GM10248 (cell line): ENCODE measurements at regions of chr12 and their contacts with region 1.

Region 1: GRCh38 chr12:53746592-53747092 is 5.1 kb downstream of the CISTR start:
- DNase-seq: peak; percentile 86
- CTCF ChIP-seq: peak; percentile 100

Region 2: GRCh38 chr12:53675651-53676453 is 70.8 kb before region 1 on chr12 and contains the start of gene ATP5MC2:
- CTCF ChIA-PET with region 1: interaction called, 72 read pairs
- POLR2A ChIA-PET with region 1: no interaction called
- DNase-seq: peak; percentile 99
- CTCF ChIP-seq: peak; percentile 99

Region 3: DNA sequence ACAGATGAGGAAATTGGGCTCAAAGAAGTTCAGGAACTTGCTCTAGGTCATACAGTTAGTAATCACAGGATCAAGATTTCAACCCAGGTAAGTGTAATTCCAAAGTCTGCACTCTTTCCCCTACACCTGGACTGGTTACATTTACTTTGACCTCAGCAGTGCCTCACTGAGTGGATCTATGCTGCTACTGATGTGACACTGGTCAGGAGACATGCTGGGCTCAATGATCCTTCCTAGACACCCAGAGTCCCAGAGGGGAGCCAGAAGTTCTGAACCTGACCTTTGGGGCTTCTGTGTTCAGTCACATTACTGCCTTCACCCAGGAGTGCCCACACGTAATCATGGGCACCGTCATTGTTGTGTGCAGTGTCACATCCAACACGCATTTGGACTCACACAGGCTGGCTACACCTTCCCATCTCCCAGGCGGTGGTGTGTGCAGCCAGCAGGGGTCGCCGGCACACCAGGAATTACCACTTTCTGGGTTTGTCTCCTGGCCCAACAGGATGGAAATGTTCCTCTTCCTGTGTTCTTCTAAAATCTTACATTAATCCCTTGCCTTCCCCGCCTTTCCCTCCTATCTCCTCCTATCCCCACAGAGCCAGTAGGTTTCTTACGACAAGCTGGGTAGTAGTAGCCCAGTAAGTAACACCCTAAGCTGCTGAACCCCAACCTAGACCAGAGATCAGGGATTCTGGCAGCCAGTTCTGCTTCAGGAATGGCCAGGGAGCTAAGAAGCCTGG is 45.0 kb before region 1 on chr12:
- CTCF ChIA-PET with region 1: interaction called, 434 read pairs
- POLR2A ChIA-PET with region 1: no interaction called
- DNase-seq: peak; percentile 80
- CTCF ChIP-seq: peak; percentile 99

Region 4: GRCh38 chr12:53727310-53728041 is 19.2 kb before region 1 on chr12 and contains the start of gene CALCOCO1:
- CTCF ChIA-PET with region 1: interaction called, 460 read pairs
- POLR2A ChIA-PET with region 1: no interaction called
- DNase-seq: peak; percentile 97
- CTCF ChIP-seq: no peak

Region 5: GRCh38 chr12:53770281-53770680 is 23.6 kb after region 1 on chr12:
- CTCF ChIA-PET with region 1: interaction called, 37 read pairs
- POLR2A ChIA-PET with region 1: no interaction called
- DNase-seq: no peak
- CTCF ChIP-seq: no peak

Region 6: GRCh38 chr12:53806721-53807120 is 60.1 kb after region 1 on chr12:
- CTCF ChIA-PET with region 1: no interaction called
- POLR2A ChIA-PET with region 1: no interaction called
- DNase-seq: no peak
- CTCF ChIP-seq: no peak